PC-9 (cell line): ENCODE measurements at regions of chr2 and their contacts with region 1.

Region 1: GRCh38 chr2:215601990-215602721 is 166.3 kb upstream of the FN1 start:
- DNase-seq: peak in 1 of 2 experiments; percentile 31
- H3K4me3 ChIP-seq: no peak overlapping the region
- H3K27ac ChIP-seq: no peak overlapping the region
- H3K4me1 ChIP-seq: no peaks in the 10 kb centered on the region
- H3K27me3 ChIP-seq: no peaks in the 10 kb centered on the region
- CTCF ChIP-seq: no peak

Region 2: GRCh38 chr2:215528555-215528954 is 73.6 kb before region 1 on chr2:
- CTCF ChIA-PET with region 1: no interaction called
- POLR2A ChIA-PET with region 1: no interaction called
- intact Hi-C with region 1: no loop called
- DNase-seq: no peak
- H3K4me3 ChIP-seq: no peak overlapping the region
- H3K27ac ChIP-seq: no peak overlapping the region
- H3K4me1 ChIP-seq: peaks cover 32% of the 10 kb centered on the region; the same call in 1 of the 2 replicates
- H3K27me3 ChIP-seq: no peaks in the 10 kb centered on the region
- CTCF ChIP-seq: no peak

Region 3: DNA sequence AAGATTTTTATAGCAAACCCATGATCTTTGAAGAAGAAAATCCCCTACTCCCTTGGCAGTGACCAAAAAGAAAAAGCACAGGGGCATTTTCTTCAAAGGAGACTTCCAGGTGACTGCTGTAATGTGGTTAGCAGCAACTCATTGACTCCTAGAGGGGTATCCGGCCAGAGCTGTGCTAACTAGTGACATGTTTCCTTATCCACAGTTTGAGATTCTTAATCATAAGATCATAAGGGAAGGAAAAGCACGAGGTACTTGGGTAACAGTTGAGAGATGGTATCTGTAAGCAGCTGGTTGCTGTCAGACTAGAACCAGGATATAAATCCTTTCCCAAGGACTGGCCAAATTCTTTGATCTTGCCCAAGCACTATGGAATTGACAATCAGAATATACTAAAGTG is 286.5 kb after region 1 on chr2:
- CTCF ChIA-PET with region 1: interaction called, 10 read pairs
- POLR2A ChIA-PET with region 1: no interaction called
- intact Hi-C with region 1: no loop called
- DNase-seq: no peak
- H3K4me3 ChIP-seq: no peak overlapping the region
- H3K27ac ChIP-seq: no peak overlapping the region
- H3K4me1 ChIP-seq: no peaks in the 10 kb centered on the region
- H3K27me3 ChIP-seq: no peaks in the 10 kb centered on the region
- CTCF ChIP-seq: no peak